Heart left ventricle (tissue), 16 donors: ENCODE measurements at regions of chr9 and their contacts with region 1.

Region 1: GRCh38 chr9:83334320-83334719 is 203.9 kb downstream of the FRMD3 start:
- DNase-seq: peak; percentile 80 to 91 (median 82)
- ATAC-seq: peak; percentile 60 to 95 (median 93)
- H3K4me3 ChIP-seq: no peak overlapping the region
- H3K27ac ChIP-seq: no peak overlapping the region
- H3K4me1 ChIP-seq: peaks cover 0 to 9% (median 0%) of the 10 kb centered on the region in 12 donors
- H3K27me3 ChIP-seq: no peaks in the 10 kb centered on the region
- CTCF ChIP-seq: peak; percentile 89 to 99 (median 96)
- POLR2A ChIP-seq: no peak

Region 2: DNA sequence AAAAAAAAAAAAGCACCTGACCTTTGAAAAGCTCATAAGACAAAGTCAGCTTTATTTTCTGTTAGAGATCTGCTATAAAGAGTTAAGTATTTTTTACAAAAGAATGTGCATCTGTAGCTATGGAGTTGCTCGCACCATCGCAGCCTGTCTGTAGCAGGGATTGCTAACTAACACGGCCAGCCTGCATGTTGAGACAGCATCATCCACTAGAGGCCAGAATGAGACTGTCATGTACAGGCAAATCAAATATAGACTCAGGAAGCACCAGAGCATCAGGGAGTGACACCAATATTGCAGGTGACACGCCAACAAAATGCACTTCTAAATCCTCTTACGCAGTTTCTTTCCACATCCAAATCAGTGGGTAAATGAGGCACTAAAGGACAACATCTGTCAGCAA is 135.1 kb before region 1 on chr9:
- intact Hi-C with region 1: loop called in 1 of 10 experiments (anchors 5 kb)
- DNase-seq: peak in 4 of 5 donors; percentile 36 to 46 (median 41)
- ATAC-seq: peak; percentile 82 to 97 (median 92)
- H3K4me3 ChIP-seq: no peak overlapping the region
- H3K27ac ChIP-seq: no peak overlapping the region
- H3K4me1 ChIP-seq: peaks cover 0 to 8% (median 0%) of the 10 kb centered on the region in 12 donors
- H3K27me3 ChIP-seq: peaks cover 0 to 9% (median 0%) of the 10 kb centered on the region in 9 donors
- CTCF ChIP-seq: peak; percentile 35 to 80 (median 67)
- POLR2A ChIP-seq: no peak

Region 3: DNA sequence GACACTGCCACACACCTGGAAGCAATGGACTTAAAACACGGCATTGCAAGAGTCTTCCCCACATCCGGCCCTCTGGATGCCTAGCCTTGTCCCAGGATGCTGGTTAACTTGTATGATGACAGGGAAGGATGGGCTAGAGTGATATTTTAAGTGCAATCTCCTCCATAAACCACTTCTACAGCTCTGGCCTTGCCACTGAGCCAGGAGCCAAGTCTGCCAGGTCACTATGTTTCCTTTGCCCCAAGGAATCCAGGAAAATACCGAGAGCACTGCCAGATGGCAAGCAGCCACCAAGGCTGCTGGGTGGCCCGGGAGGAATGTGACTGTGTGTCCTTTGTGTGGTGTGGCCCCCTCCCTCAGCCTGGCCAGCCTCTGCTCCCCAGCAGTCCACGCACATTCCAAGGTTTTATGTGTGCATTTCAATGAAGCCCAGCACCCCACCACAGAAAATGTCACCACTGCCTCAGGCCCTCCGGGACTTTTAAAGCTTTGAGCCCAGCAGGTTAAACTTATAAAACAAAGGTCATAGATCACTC is 97.9 kb after region 1 on chr9:
- intact Hi-C with region 1: loop called in 1 of 10 experiments (anchors 5 kb)
- DNase-seq: peak; percentile 61 to 87 (median 86)
- ATAC-seq: peak; percentile 91 to 94 (median 92)
- H3K4me3 ChIP-seq: no peak overlapping the region
- H3K27ac ChIP-seq: peak overlapping the region in 9 of 12 donors; percentile 16 to 69 (median 49)
- H3K4me1 ChIP-seq: peaks cover 0 to 54% (median 24%) of the 10 kb centered on the region in 12 donors
- H3K27me3 ChIP-seq: no peaks in the 10 kb centered on the region
- CTCF ChIP-seq: no peak
- POLR2A ChIP-seq: no peak

Region 4: DNA sequence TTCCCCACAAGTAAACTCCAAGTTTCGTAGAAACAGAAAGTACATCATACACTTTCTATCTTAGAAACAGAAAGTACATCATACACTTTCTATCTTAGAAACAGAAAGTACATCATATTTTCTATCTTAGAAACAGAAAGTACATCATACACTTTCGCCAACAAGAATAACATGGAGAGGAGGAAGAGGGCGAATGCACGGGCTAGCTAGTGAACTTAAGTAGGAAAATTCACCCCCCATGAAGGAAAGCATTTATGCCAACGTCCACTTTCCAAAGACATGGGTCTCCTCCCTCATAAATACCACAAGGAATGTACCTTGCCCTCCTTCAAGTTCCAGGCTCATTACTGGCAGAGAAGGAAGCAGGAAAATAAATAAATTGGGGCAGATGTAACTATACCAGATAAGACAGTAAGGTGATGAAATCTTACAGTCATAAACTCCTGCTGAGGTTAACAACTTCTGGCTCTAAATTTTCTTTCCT is 139.2 kb after region 1 on chr9:
- intact Hi-C with region 1: loop called in 1 of 10 experiments (anchors 10 kb)
- DNase-seq: no peak
- ATAC-seq: peak in 1 of 4 donors; percentile 32
- H3K4me3 ChIP-seq: peak overlapping the region in 8 of 12 donors; percentile 8 to 44 (median 24)
- H3K27ac ChIP-seq: peak overlapping the region; percentile 7 to 88 (median 76)
- H3K4me1 ChIP-seq: peaks cover 3 to 58% (median 27%) of the 10 kb centered on the region in 12 donors
- H3K27me3 ChIP-seq: no peaks in the 10 kb centered on the region
- CTCF ChIP-seq: no peak
- POLR2A ChIP-seq: no peak

Region 5: GRCh38 chr9:83544002-83544698 is 209.8 kb after region 1 on chr9:
- intact Hi-C with region 1: loop called (anchors 1 to 2 kb)
- DNase-seq: peak in 3 of 5 donors; percentile 35 to 50 (median 43)
- ATAC-seq: peak; percentile 73 to 92 (median 92)
- H3K4me3 ChIP-seq: no peak overlapping the region
- H3K27ac ChIP-seq: peak overlapping the region in 1 of 12 donors; percentile 21
- H3K4me1 ChIP-seq: peaks cover 0 to 12% (median 3%) of the 10 kb centered on the region in 12 donors
- H3K27me3 ChIP-seq: no peaks in the 10 kb centered on the region
- CTCF ChIP-seq: peak; percentile 64 to 86 (median 77)
- POLR2A ChIP-seq: no peak

Region 6: DNA sequence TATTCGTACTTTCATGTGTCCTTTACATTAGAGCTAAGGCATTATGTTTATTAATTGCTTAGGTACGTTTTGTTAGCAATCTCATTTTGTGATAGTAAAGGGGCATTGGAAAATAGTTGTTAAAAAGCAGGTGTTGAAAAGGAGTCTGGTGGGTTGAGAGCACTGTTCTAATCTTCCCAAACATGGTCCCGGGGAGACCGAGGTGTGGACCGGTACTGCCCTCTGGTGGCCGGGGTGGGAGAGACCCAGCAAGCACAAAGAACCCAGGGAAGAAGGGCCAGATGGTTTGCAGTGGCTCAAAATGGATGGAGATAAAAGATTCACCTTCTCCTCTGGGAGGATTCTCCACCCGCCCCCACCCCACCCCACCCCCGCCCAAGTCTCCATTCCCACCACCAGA is 314.8 kb after region 1 on chr9:
- intact Hi-C with region 1: loop called in 1 of 10 experiments (anchors 5 kb)
- DNase-seq: peak; percentile 60 to 83 (median 61)
- ATAC-seq: peak; percentile 58 to 81 (median 76)
- H3K4me3 ChIP-seq: no peak overlapping the region
- H3K27ac ChIP-seq: peak overlapping the region in 2 of 12 donors; percentile 15 to 34
- H3K4me1 ChIP-seq: peaks cover 0 to 15% (median 1%) of the 10 kb centered on the region in 12 donors
- H3K27me3 ChIP-seq: no peaks in the 10 kb centered on the region
- CTCF ChIP-seq: peak; percentile 60 to 77 (median 71)
- POLR2A ChIP-seq: no peak